Dendritic cell treated with granulocyte-macrophage colony-stimulating factor and Interleukin-4, amounts not matched to agents 40 ng/mL and 50 ng/mL, for 4 days (primary cell): ENCODE measurements at regions of chr15 and their contacts with region 1.

Region 1: DNA sequence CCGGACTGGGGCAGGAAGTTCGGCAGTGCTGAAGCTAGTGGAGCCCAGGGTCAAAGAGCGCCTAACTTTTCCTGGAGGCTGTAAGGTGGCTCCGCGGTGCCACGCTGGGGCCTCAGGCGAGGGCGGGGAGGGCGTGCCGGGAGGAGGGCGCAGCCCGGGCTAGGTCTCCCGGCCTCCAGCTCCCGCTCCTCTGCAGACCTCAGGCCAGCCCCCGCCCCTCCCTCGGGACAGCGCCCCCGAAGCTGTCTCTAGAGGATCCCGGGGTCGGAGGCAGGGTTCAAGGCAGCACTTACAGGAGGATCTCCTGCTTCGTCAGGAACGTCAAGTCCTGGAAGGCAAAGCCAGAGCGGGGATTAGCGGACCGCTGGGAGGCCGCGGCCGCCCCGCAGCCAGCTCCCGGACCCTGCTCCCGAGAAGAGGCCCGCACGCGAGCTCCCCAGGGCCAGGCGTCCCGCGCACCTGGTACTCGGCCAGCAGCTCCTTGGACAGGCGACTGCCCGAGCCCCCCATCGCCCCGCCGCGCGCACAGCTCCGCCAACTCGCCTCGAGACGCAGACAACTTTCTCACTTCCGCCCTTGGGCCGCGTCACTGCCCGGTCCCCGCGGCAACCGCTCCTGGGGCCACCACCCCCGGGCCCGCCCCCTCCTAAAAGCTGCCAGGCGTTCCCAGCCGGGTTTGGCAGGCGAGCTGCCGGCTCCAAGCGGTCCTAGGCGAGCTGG is at the start of gene CIB1:
- H3K4me3 Mint-ChIP-seq: peak within 1 kb of the TSS; percentile 79
- H3K27ac Mint-ChIP-seq: peak within 1 kb of the TSS; percentile 83
- H3K4me1 Mint-ChIP-seq: peaks cover 53% of the 10 kb centered on the region
- H3K27me3 Mint-ChIP-seq: no peaks in the 10 kb centered on the region

Region 2: DNA sequence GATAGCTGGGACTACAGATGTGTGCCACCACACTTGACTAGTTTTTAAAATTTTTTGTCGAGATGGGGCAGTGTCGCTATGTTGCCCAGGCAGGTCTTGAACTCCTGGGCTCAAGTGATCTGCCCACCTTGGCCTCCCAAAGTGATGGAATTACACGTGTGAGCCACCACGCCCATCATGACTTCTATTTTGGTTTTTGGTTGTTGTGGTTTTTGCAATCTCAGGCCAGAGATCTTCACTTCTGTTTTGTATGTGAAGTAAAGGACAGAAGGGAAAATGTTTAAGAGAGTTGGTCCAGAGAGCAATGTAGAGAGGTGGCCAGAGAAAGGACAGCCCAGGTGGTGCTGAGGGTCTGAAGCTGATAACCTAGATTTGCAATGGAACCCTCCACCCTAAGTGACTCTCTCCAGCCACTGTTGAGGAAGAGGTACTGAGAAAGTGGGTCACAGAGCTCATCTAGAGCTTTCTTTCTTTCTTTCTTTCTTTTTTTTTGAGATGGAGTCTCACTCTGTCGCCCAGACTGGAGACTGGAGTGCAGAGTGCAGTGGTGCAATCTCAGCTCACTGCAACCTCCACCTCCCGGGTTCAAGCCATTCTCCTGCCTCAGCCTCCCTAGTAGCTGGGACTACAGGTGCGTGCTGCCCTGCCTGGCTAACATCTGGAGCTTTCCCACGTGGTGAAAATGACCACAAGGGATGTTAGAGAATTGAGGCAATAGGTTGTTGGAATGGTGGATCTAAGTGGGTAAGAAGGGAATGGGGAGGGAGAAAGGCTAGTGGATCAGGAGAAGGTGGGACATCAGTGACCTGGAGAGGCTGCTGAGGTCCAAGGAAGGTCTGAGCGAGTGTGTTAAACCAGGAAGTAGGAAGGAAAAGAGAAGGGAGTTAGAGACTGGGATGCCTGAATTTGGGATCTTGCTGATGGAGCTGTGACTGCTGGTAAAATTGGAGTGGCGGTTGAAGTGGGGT is 54.8 kb before region 1 on chr15:
- intact Hi-C with region 1: no loop called
- H3K4me3 Mint-ChIP-seq: peak overlapping the region; percentile 41
- H3K27ac Mint-ChIP-seq: peak overlapping the region; percentile 38
- H3K4me1 Mint-ChIP-seq: peaks cover 24% of the 10 kb centered on the region
- H3K27me3 Mint-ChIP-seq: peaks cover 6% of the 10 kb centered on the region

Region 3: GRCh38 chr15:90191794-90192509 is 41.6 kb before region 1 on chr15:
- intact Hi-C with region 1: no loop called
- H3K4me3 Mint-ChIP-seq: peak overlapping the region; percentile 42
- H3K27ac Mint-ChIP-seq: peak overlapping the region; percentile 31
- H3K4me1 Mint-ChIP-seq: peaks cover 62% of the 10 kb centered on the region
- H3K27me3 Mint-ChIP-seq: no peaks in the 10 kb centered on the region

Region 4: DNA sequence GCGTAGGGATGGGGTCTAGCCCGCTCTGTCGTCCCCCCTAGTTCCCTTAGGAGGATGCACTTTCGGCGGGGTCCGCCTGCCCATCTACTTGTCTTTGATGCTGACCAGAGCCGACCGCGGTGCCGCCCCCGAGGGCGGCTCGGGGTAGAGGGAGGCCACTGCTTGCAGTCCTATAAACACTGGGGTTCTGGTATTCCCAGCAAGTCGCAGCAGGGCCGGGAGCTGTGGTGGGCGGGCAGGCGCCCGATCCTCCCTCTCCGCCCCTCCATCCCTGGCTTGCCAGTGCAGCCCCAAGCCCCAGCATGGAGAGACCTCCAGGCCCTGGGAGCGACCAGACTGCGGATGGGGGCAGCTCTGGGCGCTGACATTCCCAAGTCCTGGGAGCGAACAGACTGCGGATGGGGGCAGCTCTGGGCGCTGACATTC is 31.6 kb before region 1 on chr15:
- intact Hi-C with region 1: no loop called
- H3K4me3 Mint-ChIP-seq: peak overlapping the region; percentile 80
- H3K27ac Mint-ChIP-seq: peak overlapping the region; percentile 84
- H3K4me1 Mint-ChIP-seq: peaks cover 71% of the 10 kb centered on the region
- H3K27me3 Mint-ChIP-seq: peaks cover 7% of the 10 kb centered on the region

Region 5: GRCh38 chr15:90249203-90249863 is 15.8 kb after region 1 on chr15 and contains the start of gene TTLL13:
- intact Hi-C with region 1: loop called (anchors 1 kb)
- H3K4me3 Mint-ChIP-seq: peak within 1 kb of the TSS; percentile 77
- H3K27ac Mint-ChIP-seq: peak within 1 kb of the TSS; percentile 47
- H3K4me1 Mint-ChIP-seq: peaks cover 20% of the 10 kb centered on the region
- H3K27me3 Mint-ChIP-seq: peaks cover 12% of the 10 kb centered on the region

Region 6: GRCh38 chr15:90648137-90649070 is 414.9 kb after region 1 on chr15:
- intact Hi-C with region 1: no loop called
- H3K4me3 Mint-ChIP-seq: peak overlapping the region; percentile 43
- H3K27ac Mint-ChIP-seq: peak overlapping the region; percentile 92
- H3K4me1 Mint-ChIP-seq: peaks cover 71% of the 10 kb centered on the region
- H3K27me3 Mint-ChIP-seq: no peaks in the 10 kb centered on the region